HCT116 (cell line): ENCODE measurements at regions of chr15 and their contacts with region 1.

Region 1: DNA sequence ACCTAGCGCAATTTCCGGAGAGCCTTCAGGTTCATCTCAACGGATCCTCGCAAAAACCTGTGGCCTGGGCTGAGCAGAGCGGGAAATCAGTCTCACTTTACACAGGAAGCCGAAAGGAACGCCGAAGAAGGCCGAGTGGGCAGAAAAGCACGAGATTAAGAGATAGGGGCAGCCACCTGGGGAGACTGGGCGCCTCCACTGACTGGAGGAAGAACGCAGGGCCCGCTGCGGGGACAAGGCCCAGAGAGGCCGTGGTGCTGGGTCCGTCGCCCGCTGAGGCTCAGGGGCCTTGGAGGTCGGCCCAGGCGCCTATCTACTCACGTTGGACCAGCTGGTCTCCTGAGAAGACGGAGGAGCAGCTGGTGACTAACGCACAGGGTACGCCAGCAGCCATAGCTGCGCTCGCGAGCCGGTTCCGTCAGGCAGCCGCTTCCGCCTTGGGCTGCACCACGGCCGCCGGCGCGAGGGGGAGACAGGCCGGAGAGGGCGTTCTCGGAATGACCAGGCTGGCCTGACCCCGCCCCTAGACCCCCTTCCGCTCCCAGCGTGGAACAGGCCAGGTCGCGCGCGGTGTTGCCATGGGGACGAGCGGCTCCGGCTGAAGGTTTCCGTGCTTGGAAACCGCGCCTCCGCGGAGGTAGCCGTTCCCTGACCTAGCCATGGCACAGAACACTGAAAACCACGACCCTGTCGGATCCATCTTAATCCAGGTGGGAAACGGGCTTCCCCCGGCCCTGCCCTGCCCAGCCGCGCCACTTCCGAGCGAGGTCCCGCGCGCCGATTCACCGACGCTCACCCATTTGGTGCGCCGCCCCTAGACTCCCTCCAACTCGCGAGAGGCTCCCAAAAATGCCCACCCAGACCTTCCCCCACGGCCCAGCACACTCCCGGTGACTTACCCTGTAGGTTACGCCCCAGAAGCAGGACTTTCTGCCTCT is at the starts of genes AAGAB and IQCH:
- DNase-seq: peak; percentile 93
- ATAC-seq: peak; percentile 92
- H3K4me3 ChIP-seq: peak within 1 kb of the TSS; percentile 77 to 96
- H3K27ac ChIP-seq: peak within 1 kb of the TSS; percentile 60
- H3K4me1 ChIP-seq: peaks cover 7 to 21% of the 10 kb centered on the region in 2 experiments; a peak in 3 of 4 replicates
- H3K27me3 ChIP-seq: no peaks in the 10 kb centered on the region
- CTCF ChIP-seq: no peak
- POLR2A ChIP-seq: peak; percentile 43
- RAD21 ChIP-seq: peak; percentile 5; the same call in 1 of the 2 replicates
- total RNA-seq, gene AAGAB: 52.0 TPM
- total RNA-seq, gene IQCH: 4.6 TPM

Region 2: GRCh38 chr15:65792130-65792987 is 1462.1 kb before region 1 on chr15 and contains the start of gene DENND4A:
- CTCF ChIA-PET with region 1: no interaction called
- POLR2A ChIA-PET with region 1: no interaction called
- RAD21 ChIA-PET with region 1: no interaction called
- intact Hi-C with region 1: loop called (anchors 10 kb)
- DNase-seq: peak; percentile 96
- ATAC-seq: peak; percentile 90
- H3K4me3 ChIP-seq: peak within 1 kb of the TSS; percentile 81 to 82
- H3K27ac ChIP-seq: peak within 1 kb of the TSS; percentile 69
- H3K4me1 ChIP-seq: peaks cover 30 to 54% of the 10 kb centered on the region in 2 experiments
- H3K27me3 ChIP-seq: no peaks in the 10 kb centered on the region
- CTCF ChIP-seq: no peak
- POLR2A ChIP-seq: peak; percentile 60
- RAD21 ChIP-seq: no peak
- total RNA-seq, gene DENND4A: 9.1 TPM

Region 3: GRCh38 chr15:66955871-66956585 is 298.5 kb before region 1 on chr15:
- CTCF ChIA-PET with region 1: no interaction called
- POLR2A ChIA-PET with region 1: no interaction called
- RAD21 ChIA-PET with region 1: no interaction called
- intact Hi-C with region 1: no loop called
- DNase-seq: peak; percentile 56
- ATAC-seq: peak; percentile 77
- H3K4me3 ChIP-seq: no peak overlapping the region
- H3K27ac ChIP-seq: no peak overlapping the region; the same call in 1 of the 2 replicates
- H3K4me1 ChIP-seq: peaks cover 9 to 42% of the 10 kb centered on the region in 2 experiments
- H3K27me3 ChIP-seq: no peaks in the 10 kb centered on the region
- CTCF ChIP-seq: no peak
- POLR2A ChIP-seq: no peak
- RAD21 ChIP-seq: 0 out of 2 replicates have a peak, but pooled peaks have one; percentile 26

Region 4: DNA sequence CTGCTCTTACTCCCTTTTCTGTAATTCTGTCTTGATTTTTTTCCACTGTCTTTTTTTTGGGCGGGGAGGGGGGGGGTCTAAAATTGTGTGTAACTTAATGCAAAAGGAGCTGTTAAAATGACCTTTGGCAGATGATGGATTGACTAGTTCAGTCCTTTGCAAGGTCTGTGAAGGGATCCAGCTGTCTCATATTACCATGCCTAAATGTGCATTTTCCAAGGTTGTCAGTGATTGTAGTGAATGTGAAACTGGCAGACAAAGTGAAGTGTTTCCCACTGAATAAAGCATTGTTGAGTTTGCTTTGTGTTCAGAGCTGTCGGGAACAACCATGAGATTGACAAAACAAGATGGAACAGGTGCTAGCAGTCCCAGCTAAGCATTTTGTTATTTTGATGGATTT is 460.7 kb after region 1 on chr15:
- CTCF ChIA-PET with region 1: no interaction called
- POLR2A ChIA-PET with region 1: no interaction called
- RAD21 ChIA-PET with region 1: no interaction called
- intact Hi-C with region 1: no loop called
- DNase-seq: no peak
- ATAC-seq: no peak
- H3K4me3 ChIP-seq: no peak overlapping the region
- H3K27ac ChIP-seq: no peak overlapping the region
- H3K4me1 ChIP-seq: no peaks in the 10 kb centered on the region
- H3K27me3 ChIP-seq: no peaks in the 10 kb centered on the region
- CTCF ChIP-seq: no peak
- POLR2A ChIP-seq: no peak
- RAD21 ChIP-seq: no peak